Activated CD8-positive, alpha-beta T cell treated with anti-CD3 and anti-CD28 coated beads, Interleukin-2, amount 10 ng/mL, durations not matched to agents 7 days and 5 days (primary cell): ENCODE measurements at regions of chr6 and their contacts with region 1.

Region 1: GRCh38 chr6:150685860-150686259 is 86.2 kb downstream of the PLEKHG1 start:
- DNase-seq: peak; percentile 57
- ATAC-seq: peak; percentile 60
- H3K4me3 Mint-ChIP-seq: no peak overlapping the region
- H3K27ac Mint-ChIP-seq: no peak overlapping the region
- H3K4me1 Mint-ChIP-seq: peaks cover 12% of the 10 kb centered on the region
- H3K27me3 Mint-ChIP-seq: no peaks in the 10 kb centered on the region

Region 2: GRCh38 chr6:150417899-150418826 is 267.7 kb before region 1 on chr6:
- CTCF ChIA-PET with region 1: interaction called, 11 read pairs
- POLR2A ChIA-PET with region 1: no interaction called
- DNase-seq: peak; percentile 54
- ATAC-seq: peak; percentile 78
- H3K4me3 Mint-ChIP-seq: peak overlapping the region; percentile 57
- H3K27ac Mint-ChIP-seq: peak overlapping the region; percentile 64
- H3K4me1 Mint-ChIP-seq: peaks cover 23% of the 10 kb centered on the region
- H3K27me3 Mint-ChIP-seq: peaks cover 26% of the 10 kb centered on the region

Region 3: DNA sequence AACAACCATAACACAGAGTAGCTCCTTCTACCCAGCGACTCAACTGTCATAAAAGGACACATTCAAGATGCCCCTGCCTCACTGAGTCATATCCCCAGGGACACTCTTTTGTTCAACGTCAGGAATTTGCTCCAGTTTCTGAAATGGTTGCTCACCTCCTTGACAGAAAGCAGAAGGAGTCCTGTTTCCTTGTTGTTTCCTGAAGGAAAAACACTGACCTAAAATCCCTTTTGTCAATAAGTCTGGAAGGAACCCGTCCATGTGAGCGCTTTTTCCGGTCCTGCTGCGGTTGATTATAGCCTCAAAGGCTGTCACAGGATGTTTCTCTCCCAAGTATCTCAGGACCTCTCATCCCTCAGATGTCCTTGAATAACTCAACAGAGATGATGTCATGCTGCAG is 199.8 kb before region 1 on chr6:
- CTCF ChIA-PET with region 1: no interaction called
- POLR2A ChIA-PET with region 1: no interaction called
- DNase-seq: no peak
- ATAC-seq: no peak
- H3K4me3 Mint-ChIP-seq: no peak overlapping the region
- H3K27ac Mint-ChIP-seq: no peak overlapping the region
- H3K4me1 Mint-ChIP-seq: peaks cover 5% of the 10 kb centered on the region
- H3K27me3 Mint-ChIP-seq: peaks cover 7% of the 10 kb centered on the region

Region 4: GRCh38 chr6:150696190-150696589 is 10.3 kb after region 1 on chr6:
- CTCF ChIA-PET with region 1: interaction called, 16 read pairs
- POLR2A ChIA-PET with region 1: no interaction called
- DNase-seq: no peak
- ATAC-seq: no peak
- H3K4me3 Mint-ChIP-seq: no peak overlapping the region
- H3K27ac Mint-ChIP-seq: no peak overlapping the region
- H3K4me1 Mint-ChIP-seq: no peaks in the 10 kb centered on the region
- H3K27me3 Mint-ChIP-seq: peaks cover 6% of the 10 kb centered on the region